ENCODE measurements at regions of chr20 and their contacts with region 1.

Region 1: DNA sequence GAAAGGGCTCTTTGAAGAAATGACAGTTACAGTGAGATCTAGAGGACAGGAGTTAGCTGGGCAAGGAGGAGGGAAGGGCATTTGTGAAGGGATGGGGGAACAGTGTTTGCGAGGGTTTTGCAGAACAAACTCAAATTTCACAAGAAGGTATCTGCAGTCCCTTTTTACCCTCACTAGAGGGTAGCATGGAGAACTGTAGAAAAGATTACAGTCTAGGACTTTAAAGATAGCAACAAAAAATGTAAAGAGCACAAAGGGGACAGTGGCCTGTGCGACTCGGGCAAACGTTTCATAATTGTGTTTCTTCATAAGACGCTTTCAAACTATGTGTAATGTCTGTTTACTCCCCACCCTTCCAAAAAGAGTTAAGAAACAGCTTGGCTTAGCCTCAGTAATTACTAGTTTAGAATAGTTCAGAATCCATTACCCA is 21.2 kb upstream of the ASXL1 start:
- DNase-seq: peak in 2 of 9 experiments; percentile 32 to 57
- ATAC-seq: peak; percentile 71
- H3K4me3 ChIP-seq: no peak overlapping the region
- H3K4me3 Mint-ChIP-seq: no peak overlapping the region
- H3K27ac ChIP-seq: no peak overlapping the region
- H3K27ac Mint-ChIP-seq: no peak overlapping the region
- H3K4me1 ChIP-seq: no peaks in the 10 kb centered on the region
- H3K4me1 Mint-ChIP-seq: peaks cover 17% of the 10 kb centered on the region
- H3K27me3 ChIP-seq: no peaks in the 10 kb centered on the region
- H3K27me3 Mint-ChIP-seq: no peaks in the 10 kb centered on the region
- CTCF ChIP-seq: peak; percentile 64

Region 2: DNA sequence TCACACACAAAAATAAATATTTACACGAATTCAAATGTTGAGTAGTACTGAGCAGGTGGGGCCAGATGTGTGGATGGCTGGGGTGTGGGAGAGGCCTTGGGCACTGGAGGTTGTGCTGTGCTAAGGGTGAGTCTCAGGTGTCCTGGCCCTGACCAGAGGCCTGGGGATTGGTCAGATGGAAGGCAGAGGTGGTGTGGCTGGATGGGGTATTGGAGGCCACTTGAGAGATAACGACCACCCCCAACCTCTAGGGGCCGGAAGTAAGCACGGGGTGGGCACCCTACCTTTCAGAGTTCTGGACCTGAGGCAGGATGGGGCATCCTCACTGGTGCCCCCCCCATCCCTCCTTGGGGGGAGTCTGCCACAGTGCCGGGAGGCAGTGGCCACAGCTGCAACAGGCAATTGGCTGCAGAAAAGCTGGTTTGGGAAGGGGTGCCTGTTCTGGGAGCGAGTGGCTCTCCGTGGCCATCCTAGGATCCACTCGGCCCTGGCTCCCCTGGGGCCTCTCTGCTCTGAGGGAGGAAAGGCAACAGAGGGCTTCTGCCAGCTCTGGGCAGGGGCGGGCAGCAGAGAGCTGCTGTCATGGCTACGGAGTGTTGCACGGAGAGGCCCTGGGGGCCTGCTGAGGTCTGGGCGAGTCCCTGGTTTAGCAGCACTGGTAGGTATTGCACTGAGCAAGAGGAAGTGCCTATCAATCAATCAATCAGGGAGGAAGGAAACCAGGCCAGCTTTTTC is 108.8 kb after region 1 on chr20:
- CTCF ChIA-PET with region 1: no interaction called
- POLR2A ChIA-PET with region 1: no interaction called
- intact Hi-C with region 1: loop called in 1 of 2 experiments (anchors 5 kb)
- DNase-seq: peak in 2 of 9 experiments; percentile 10 to 44
- ATAC-seq: no peak
- H3K4me3 ChIP-seq: no peak overlapping the region
- H3K4me3 Mint-ChIP-seq: no peak overlapping the region
- H3K27ac ChIP-seq: no peak overlapping the region
- H3K27ac Mint-ChIP-seq: peak overlapping the region; percentile 76
- H3K4me1 ChIP-seq: peaks cover 23% of the 10 kb centered on the region
- H3K4me1 Mint-ChIP-seq: peaks cover 31% of the 10 kb centered on the region
- H3K27me3 ChIP-seq: no peaks in the 10 kb centered on the region
- H3K27me3 Mint-ChIP-seq: no peaks in the 10 kb centered on the region
- CTCF ChIP-seq: no peak